ENCODE measurements at regions of chr5 and their contacts with region 1.

Region 1: DNA sequence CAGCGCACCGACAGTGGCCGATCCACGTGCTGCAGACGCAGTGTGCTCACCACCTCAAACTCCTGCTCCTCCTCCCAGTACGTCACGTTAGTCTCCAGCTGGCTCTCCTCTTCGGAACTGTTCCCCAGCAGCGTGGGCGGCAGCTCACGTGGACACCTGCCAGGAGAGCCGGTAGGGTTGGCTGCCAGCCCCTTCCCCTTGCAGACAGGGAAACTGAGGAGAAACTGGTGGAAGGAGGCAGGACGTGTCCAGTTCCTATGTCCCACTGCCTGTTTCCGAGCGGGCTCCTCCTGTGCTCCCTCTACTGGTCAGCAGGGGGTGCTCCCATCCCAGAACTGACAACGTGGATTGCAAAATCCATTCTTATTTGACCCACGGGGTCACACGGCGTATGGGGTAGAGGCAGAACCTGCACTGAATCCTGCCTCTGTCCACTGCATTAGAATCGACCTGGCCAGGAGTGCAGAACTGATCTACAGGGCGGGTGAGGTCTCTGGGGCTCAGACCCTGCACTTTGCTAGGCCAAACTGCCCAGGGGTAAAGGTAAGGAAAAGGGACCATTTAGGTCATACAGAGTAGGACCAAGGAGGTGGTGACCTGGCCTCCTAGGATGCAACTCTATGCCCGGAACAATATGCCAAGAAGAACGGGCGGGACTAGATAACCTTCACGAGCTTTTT is 25.7 kb downstream of the PDGFRB start:
- DNase-seq: peak; percentile 78 to 86
- H3K4me3 ChIP-seq: peak overlapping the region in 2 of 4 donors; percentile 19 to 30
- H3K27ac ChIP-seq: no peak overlapping the region
- H3K4me1 ChIP-seq: peaks cover 9 to 23% (median 10%) of the 10 kb centered on the region in 4 donors
- H3K27me3 ChIP-seq: no peaks in the 10 kb centered on the region
- CTCF ChIP-seq: peak in 5 of 7 experiments; percentile 88 to 93 (median 89)
- EP300 ChIP-seq: no peak
- POLR2A ChIP-seq: no peak

Region 2: GRCh38 chr5:150217873-150218692 is 88.1 kb after region 1 on chr5:
- intact Hi-C with region 1: loop called (anchors 5 kb)
- DNase-seq: peak; percentile 86 to 95
- H3K4me3 ChIP-seq: no peak overlapping the region
- H3K27ac ChIP-seq: no peak overlapping the region
- H3K4me1 ChIP-seq: peaks cover 0 to 24% (median 5%) of the 10 kb centered on the region in 4 donors
- H3K27me3 ChIP-seq: peaks cover 0 to 27% (median 0%) of the 10 kb centered on the region in 3 donors
- CTCF ChIP-seq: peak in 5 of 7 experiments; percentile 87 to 94 (median 94)
- EP300 ChIP-seq: no peak
- POLR2A ChIP-seq: no peak

Measured in stomach (tissue), 19 donors.